T-cell (primary cell): ENCODE measurements at regions of chr18 and their contacts with region 1.

Region 1: DNA sequence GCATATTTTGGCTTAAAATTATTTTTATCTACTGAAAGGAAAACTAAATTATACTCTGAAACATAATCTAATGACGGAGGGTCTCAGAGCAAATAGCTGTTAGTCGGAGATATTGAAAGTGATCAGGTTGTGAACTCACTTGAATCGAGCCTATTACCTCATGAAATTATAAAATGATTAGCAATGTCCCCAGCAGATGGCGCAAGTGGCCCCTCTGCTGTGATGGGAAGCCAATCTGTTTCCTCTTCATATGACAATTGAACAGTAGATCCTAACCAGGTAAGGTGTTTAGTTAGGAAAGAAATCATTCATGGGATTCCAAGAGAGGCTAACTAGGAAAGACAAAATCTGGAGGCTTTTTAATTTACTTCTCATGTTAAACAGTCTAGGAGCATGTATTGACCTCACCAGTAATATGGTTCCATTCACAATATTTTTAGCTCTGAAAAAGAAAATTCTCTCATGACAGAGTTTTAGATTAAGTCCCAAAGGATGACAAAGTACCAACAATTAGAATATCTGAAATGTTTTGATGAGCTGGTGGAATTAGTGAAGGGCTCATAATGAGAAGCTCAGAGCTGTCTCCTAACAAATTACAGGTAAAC is 29.9 kb upstream of the MPPE1 start:
- DNase-seq: peak; percentile 29 to 85 (median 64)
- ATAC-seq: peak; percentile 63 to 74 (median 69)
- H3K4me3 ChIP-seq: no peak overlapping the region
- H3K4me3 Mint-ChIP-seq: no peak overlapping the region
- H3K27ac ChIP-seq: no peak overlapping the region
- H3K27ac Mint-ChIP-seq: no peak overlapping the region
- H3K4me1 ChIP-seq: no peaks in the 10 kb centered on the region
- H3K4me1 Mint-ChIP-seq: no peaks in the 10 kb centered on the region
- H3K27me3 ChIP-seq: peaks cover 0 to 3% of the 10 kb centered on the region in 2 experiments
- H3K27me3 Mint-ChIP-seq: no peaks in the 10 kb centered on the region

Region 2: GRCh38 chr18:11688989-11689668 is 248.8 kb before region 1 on chr18 and contains the start of gene GNAL:
- CTCF ChIA-PET with region 1: no interaction called
- POLR2A ChIA-PET with region 1: no interaction called
- DNase-seq: peak in 25 of 35 experiments; percentile 1 to 51 (median 15)
- ATAC-seq: peak; percentile 48 to 61 (median 56)
- H3K4me3 ChIP-seq: peak within 1 kb of the TSS; percentile 37 to 79
- H3K4me3 Mint-ChIP-seq: peak within 1 kb of the TSS; percentile 65 to 71 (median 67)
- H3K27ac ChIP-seq: no peak within 1 kb of the TSS
- H3K27ac Mint-ChIP-seq: no peak within 1 kb of the TSS
- H3K4me1 ChIP-seq: peaks cover 0 to 11% of the 10 kb centered on the region in 2 experiments
- H3K4me1 Mint-ChIP-seq: peaks cover 8 to 13% (median 11%) of the 10 kb centered on the region in 3 donors
- H3K27me3 ChIP-seq: peaks cover 8 to 34% of the 10 kb centered on the region in 2 experiments
- H3K27me3 Mint-ChIP-seq: peaks cover 35 to 53% of the 10 kb centered on the region in 2 donors
- total RNA-seq, gene GNAL: 0.18 to 0.86 (median 0.38) TPM

Region 3: GRCh38 chr18:11995445-11996189 is 57.6 kb after region 1 on chr18:
- CTCF ChIA-PET with region 1: interaction called, 69 to 160 read pairs
- POLR2A ChIA-PET with region 1: interaction called in 1 of 2 experiments, 3 read pairs
- DNase-seq: peak; percentile 10 to 75 (median 45)
- ATAC-seq: peak; percentile 78 to 90 (median 84)
- H3K4me3 ChIP-seq: no peak overlapping the region
- H3K4me3 Mint-ChIP-seq: peak overlapping the region in 2 of 3 donors; percentile 32 to 43
- H3K27ac ChIP-seq: no peak overlapping the region
- H3K27ac Mint-ChIP-seq: peak overlapping the region; percentile 13 to 36
- H3K4me1 ChIP-seq: peaks cover 5 to 14% of the 10 kb centered on the region in 2 experiments
- H3K4me1 Mint-ChIP-seq: peaks cover 11 to 18% (median 12%) of the 10 kb centered on the region in 3 donors
- H3K27me3 ChIP-seq: no peaks in the 10 kb centered on the region
- H3K27me3 Mint-ChIP-seq: no peaks in the 10 kb centered on the region

Region 4: DNA sequence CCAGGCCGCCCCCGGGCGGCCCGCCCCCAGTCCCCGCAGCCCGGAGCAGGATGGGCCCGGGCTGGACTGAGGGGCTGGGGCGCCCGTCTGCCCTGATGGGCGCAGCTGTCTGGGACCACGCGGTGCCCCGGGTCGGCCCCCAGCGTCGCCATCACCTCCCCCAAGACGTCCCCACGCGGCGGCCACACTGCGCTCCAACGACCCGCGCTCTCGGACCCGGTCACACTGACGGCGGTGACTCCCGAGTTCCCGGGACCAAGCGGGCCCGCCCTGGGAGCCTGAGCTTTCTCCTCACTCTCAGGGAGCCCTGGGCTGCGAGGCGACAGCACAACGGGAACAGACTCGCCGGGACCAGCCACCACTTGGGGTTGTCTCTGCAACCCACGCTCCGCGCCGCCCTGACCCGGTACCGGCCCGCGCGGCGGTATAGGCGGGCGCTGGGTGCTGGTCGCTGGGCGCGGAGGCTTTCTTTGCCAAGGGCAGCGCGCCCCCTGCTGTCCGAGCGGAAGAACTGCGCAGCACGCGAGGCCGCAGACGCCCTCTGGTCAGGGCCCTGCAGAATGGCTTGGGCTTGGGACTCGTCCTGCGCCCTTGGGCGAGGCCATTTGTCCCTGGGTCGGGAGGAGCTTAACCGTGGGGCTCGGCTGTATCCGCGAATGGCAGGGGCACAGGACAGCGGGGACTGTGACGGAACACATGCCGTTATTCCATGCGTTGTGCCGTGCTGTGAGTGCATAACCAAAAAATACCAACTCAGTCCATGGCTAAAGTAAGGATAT is 100.9 kb after region 1 on chr18:
- CTCF ChIA-PET with region 1: interaction called, 9 to 26 read pairs
- POLR2A ChIA-PET with region 1: no interaction called
- DNase-seq: peak; percentile 30 to 82 (median 57)
- ATAC-seq: peak; percentile 91 to 94 (median 93)
- H3K4me3 ChIP-seq: peak overlapping the region; percentile 44 to 76
- H3K4me3 Mint-ChIP-seq: peak overlapping the region; percentile 37 to 71 (median 57)
- H3K27ac ChIP-seq: no peak overlapping the region
- H3K27ac Mint-ChIP-seq: no peak overlapping the region
- H3K4me1 ChIP-seq: peaks cover 0 to 11% of the 10 kb centered on the region in 2 experiments
- H3K4me1 Mint-ChIP-seq: peaks cover 2 to 6% (median 4%) of the 10 kb centered on the region in 3 donors
- H3K27me3 ChIP-seq: peaks cover 3 to 30% of the 10 kb centered on the region in 2 experiments
- H3K27me3 Mint-ChIP-seq: peaks cover 15 to 18% of the 10 kb centered on the region in 2 donors